ENCODE measurements at regions of chr20 and their contacts with region 1.

Region 1: DNA sequence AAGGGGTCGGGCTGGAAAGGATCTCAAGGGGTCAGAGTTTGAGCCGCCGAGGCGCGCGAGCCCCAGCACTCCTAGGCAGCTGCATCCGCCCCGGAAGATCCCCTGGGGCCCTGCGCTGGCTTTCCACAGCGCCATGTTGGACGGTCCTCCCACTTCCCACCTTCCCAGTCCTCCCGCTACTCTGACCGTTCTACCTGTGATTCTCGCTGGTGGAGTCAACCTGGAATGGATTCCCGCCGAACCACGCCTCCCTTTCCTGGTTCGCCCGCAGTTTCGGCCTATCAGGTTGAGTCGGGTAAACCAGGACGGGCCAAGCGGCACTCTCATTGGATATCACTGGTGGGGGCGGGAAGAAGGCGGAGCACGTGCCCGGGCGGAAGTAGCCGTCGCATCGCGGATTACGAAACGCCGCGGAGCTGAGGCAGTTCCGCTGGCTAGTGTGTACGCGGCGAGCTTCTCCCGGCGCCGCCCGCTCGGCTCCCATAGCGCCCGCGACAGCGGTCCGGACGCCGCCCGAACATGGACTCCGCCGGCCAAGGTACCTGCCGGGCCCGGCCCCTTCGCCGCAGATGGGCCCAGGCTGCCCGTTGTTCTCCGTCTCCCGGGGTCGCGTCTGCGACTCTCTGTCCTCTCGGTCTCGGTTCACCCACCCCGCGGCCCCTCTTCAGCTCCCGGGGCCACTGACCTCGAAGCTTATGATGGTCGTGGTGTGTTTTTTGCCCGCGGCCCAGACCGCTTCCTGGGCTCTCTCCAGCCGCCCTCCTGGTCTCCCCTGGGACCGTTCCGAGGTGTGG is at the start of gene TPD52L2:
- DNase-seq: peak; percentile 99
- ATAC-seq: peak; percentile 95 to 96
- total RNA-seq, gene TPD52L2: 67.5 to 68.7 TPM

Region 2: GRCh38 chr20:63775096-63775978 is 89.7 kb before region 1 on chr20:
- intact Hi-C with region 1: loop called in 1 of 2 experiments (anchors 5 kb)
- DNase-seq: peak; percentile 67
- ATAC-seq: peak; percentile 65 to 79

Region 3: GRCh38 chr20:63785691-63786131 is 79.3 kb before region 1 on chr20:
- intact Hi-C with region 1: loop called in 1 of 2 experiments (anchors 5 kb)
- DNase-seq: no peak
- ATAC-seq: no peak

Region 4: GRCh38 chr20:63955827-63956663 is 91.0 kb after region 1 on chr20 and contains the start of gene UCKL1:
- intact Hi-C with region 1: no loop called
- DNase-seq: peak; percentile 95
- ATAC-seq: peak; percentile 86 to 88
- total RNA-seq, gene UCKL1: 30.8 to 32.4 TPM

Measured in left cardiac atrium (tissue), 4 donors.